Activated CD4-positive, alpha-beta T cell treated with anti-CD3 and anti-CD28 coated beads for 36 hours (primary cell): ENCODE measurements at regions of chr2 and their contacts with region 1.

Region 1: DNA sequence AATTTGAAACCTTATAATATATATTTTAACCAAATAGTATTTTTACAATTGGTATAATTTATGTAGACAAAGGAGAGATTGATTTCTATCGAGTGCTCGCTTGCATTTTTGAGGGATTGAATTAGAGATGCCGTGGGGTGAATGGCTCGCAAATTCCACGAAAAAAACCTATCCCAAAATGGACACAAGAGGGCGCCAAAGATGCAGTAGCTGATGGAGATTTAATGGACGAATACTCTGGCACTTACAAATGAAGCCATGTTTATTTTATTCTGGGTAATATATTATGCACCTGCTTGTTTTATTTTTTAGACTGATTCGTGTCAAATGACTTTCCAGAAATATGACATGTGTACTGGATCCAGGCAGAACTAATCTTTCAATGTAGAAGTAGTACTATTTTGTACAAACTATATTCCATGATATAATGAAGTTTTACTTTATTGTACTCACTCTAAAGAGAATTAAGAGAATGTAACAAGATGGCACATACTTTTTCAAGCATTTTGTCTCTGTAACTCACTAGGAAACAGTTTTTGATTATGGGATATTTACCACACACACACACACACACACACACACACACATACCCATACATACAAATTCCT is 505.4 kb downstream of the PLCL1 start:
- DNase-seq: peak; percentile 69
- ATAC-seq: no peak
- H3K4me3 Mint-ChIP-seq: no peak overlapping the region
- H3K27ac Mint-ChIP-seq: no peak overlapping the region
- H3K4me1 Mint-ChIP-seq: no peaks in the 10 kb centered on the region
- H3K27me3 Mint-ChIP-seq: peaks cover 33% of the 10 kb centered on the region

Region 2: GRCh38 chr2:198324071-198324470 is 14.3 kb after region 1 on chr2:
- CTCF ChIA-PET with region 1: interaction called, 10 read pairs
- POLR2A ChIA-PET with region 1: no interaction called
- intact Hi-C with region 1: no loop called
- DNase-seq: no peak
- ATAC-seq: no peak
- H3K4me3 Mint-ChIP-seq: no peak overlapping the region
- H3K27ac Mint-ChIP-seq: no peak overlapping the region
- H3K4me1 Mint-ChIP-seq: peaks cover 21% of the 10 kb centered on the region
- H3K27me3 Mint-ChIP-seq: peaks cover 22% of the 10 kb centered on the region

Region 3: GRCh38 chr2:199459286-199460016 is 1149.7 kb after region 1 on chr2:
- CTCF ChIA-PET with region 1: interaction called, 3 read pairs
- POLR2A ChIA-PET with region 1: no interaction called
- intact Hi-C with region 1: loop called in 1 of 2 experiments (anchors 2 kb)
- DNase-seq: peak; percentile 80
- ATAC-seq: peak; percentile 7
- H3K4me3 Mint-ChIP-seq: peak overlapping the region; percentile 82
- H3K27ac Mint-ChIP-seq: peak overlapping the region; percentile 78
- H3K4me1 Mint-ChIP-seq: peaks cover 24% of the 10 kb centered on the region
- H3K27me3 Mint-ChIP-seq: peaks cover 41% of the 10 kb centered on the region

Region 4: GRCh38 chr2:199488772-199489400 is 1179.1 kb after region 1 on chr2:
- CTCF ChIA-PET with region 1: interaction called, 42 read pairs
- POLR2A ChIA-PET with region 1: no interaction called
- intact Hi-C with region 1: loop called (anchors 1 kb)
- DNase-seq: peak; percentile 67
- ATAC-seq: peak; percentile 49
- H3K4me3 Mint-ChIP-seq: no peak overlapping the region
- H3K27ac Mint-ChIP-seq: no peak overlapping the region
- H3K4me1 Mint-ChIP-seq: no peaks in the 10 kb centered on the region
- H3K27me3 Mint-ChIP-seq: peaks cover 17% of the 10 kb centered on the region

Region 5: GRCh38 chr2:199596549-199596948 is 1286.8 kb after region 1 on chr2:
- CTCF ChIA-PET with region 1: no interaction called
- POLR2A ChIA-PET with region 1: no interaction called
- intact Hi-C with region 1: loop called in 1 of 2 experiments (anchors 10 kb)
- DNase-seq: no peak
- ATAC-seq: no peak
- H3K4me3 Mint-ChIP-seq: no peak overlapping the region
- H3K27ac Mint-ChIP-seq: no peak overlapping the region
- H3K4me1 Mint-ChIP-seq: no peaks in the 10 kb centered on the region
- H3K27me3 Mint-ChIP-seq: peaks cover 11% of the 10 kb centered on the region